ENCODE measurements at regions of chr10 and their contacts with region 1.

Region 1: GRCh38 chr10:131885391-131886161 is 15.2 kb upstream of the PPP2R2D start:
- DNase-seq: peak; percentile 91
- ATAC-seq: peak; percentile 93

Region 2: DNA sequence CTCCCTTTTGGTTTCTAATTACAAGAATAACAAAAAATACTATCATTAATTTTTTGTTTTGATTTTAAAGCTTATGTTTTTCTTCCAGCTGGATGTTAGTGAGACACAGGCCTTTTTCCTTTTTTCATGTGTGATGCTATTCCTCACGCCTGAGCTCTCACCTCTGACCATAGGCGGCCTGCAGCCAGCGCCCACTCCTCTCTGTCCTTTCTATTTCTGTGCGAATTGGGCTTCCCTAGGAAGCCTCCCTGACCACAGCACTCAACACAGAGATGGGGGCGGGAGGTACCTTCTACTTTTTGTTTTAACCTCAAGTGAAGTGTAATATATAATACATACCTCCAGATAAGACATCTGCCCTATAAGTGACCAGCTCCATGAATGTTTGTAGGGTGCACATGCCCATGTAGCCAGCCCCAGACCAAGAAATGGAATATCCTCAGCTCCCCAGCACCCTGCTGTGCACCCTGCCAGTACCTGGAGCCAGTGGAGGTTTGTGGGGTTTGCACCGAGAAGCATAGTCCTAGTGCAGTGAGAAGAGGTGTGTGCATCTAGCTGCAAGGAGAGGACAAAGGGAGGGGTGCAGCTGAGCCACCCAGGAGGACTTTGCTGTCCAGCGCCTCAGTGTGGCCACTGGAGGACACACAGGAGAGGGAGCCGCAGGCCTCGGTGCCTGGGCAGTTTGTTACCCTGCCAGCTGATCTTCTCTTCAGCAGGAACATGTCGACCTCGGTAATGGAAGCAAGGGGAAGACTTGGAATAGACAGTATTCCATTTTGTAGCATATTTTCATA is 57.6 kb after region 1 on chr10:
- intact Hi-C with region 1: loop called (anchors 1 kb)
- DNase-seq: no peak
- ATAC-seq: peak; percentile 76

Region 3: GRCh38 chr10:132023092-132023811 is 137.7 kb after region 1 on chr10:
- intact Hi-C with region 1: loop called (anchors 1 kb)
- DNase-seq: peak; percentile 88
- ATAC-seq: peak; percentile 88

Region 4: GRCh38 chr10:132142411-132143161 is 257.0 kb after region 1 on chr10:
- intact Hi-C with region 1: loop called (anchors 2 kb)
- DNase-seq: no peak
- ATAC-seq: peak; percentile 65

Region 5: DNA sequence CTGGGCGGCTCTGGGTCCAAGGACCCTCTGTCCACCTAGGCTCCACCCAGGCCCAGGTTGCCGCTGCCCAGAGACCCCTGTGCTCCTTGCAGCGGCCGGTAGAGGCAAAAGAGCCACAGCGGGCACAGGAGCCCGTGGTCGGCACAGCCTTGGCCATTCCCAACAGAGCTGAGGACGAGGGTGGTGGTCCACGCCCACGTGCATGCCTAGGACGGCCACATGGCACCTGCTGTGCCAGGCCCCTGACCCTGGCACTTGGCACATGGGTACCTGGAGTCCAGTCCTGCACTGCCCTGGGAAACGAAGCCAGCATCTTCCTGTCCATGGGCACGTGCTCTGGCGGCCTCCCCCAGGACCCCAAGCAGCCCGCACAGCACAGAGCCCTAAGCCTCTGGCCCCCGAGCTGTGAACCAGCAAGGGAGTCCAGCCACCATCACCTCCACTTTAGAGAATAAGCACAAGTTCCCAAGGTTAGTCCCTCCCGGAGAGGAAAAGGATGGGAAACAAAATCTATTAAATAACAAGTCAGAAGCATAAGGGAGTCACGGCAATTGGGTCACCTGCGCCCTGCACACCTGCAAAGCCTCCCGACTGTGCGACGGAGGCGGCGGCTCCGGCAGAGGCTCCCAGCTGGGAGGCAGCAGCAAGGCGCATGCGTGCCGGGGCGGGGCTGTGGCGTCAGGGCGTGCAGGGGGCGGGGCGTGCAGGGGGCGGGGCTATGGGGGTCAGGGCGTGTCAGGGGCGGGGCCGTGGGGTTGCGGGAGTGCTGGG is 363.1 kb after region 1 on chr10:
- intact Hi-C with region 1: no loop called
- DNase-seq: no peak
- ATAC-seq: peak; percentile 22

Measured in Right ventricle myocardium inferior (tissue), 1 donor.